Activated CD8-positive, alpha-beta T cell treated with anti-CD3 and anti-CD28 coated beads for 36 hours (primary cell): ENCODE measurements at regions of chr7 and their contacts with region 1.

Region 1: GRCh38 chr7:80453699-80454340 is 58.0 kb downstream of the GNAT3 start:
- DNase-seq: peak; percentile 13
- ATAC-seq: no peak
- H3K4me3 Mint-ChIP-seq: no peak overlapping the region
- H3K27ac Mint-ChIP-seq: no peak overlapping the region
- H3K4me1 Mint-ChIP-seq: no peaks in the 10 kb centered on the region
- H3K27me3 Mint-ChIP-seq: no peaks in the 10 kb centered on the region
- CTCF ChIP-seq: peak; percentile 45

Region 2: DNA sequence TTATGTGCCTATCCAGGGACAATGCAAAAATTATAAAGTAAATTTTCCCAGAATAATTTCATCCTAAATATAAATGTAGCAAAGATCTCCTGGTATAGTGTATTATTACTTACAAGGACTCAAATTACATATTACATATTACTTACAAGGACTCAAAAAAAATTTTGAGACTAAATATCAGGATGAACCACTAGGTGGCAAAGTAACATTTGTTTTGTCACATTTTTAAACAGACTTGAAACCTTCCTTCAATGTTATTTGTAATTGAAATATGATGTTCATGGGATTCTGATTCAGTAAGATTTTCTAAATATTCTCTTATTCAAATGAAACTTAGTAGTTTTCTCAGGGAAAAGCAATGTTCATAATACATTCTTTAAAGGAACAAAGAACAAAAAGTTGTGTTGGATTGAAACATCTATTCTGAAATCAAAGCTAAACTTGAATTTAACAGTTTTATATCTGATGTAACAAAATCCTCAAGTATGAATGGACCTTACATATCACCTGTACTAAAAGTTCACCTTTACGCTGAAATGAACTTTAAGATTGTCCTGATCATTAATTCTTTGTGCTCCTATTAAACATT is 393.5 kb before region 1 on chr7:
- CTCF ChIA-PET with region 1: interaction called, 12 read pairs
- POLR2A ChIA-PET with region 1: no interaction called
- intact Hi-C with region 1: loop called (anchors 5 kb)
- DNase-seq: no peak
- ATAC-seq: no peak
- H3K4me3 Mint-ChIP-seq: no peak overlapping the region
- H3K27ac Mint-ChIP-seq: no peak overlapping the region
- H3K4me1 Mint-ChIP-seq: no peaks in the 10 kb centered on the region
- H3K27me3 Mint-ChIP-seq: no peaks in the 10 kb centered on the region
- CTCF ChIP-seq: peak; percentile 50